ENCODE measurements at regions of chr9 and their contacts with region 1.

Region 1: DNA sequence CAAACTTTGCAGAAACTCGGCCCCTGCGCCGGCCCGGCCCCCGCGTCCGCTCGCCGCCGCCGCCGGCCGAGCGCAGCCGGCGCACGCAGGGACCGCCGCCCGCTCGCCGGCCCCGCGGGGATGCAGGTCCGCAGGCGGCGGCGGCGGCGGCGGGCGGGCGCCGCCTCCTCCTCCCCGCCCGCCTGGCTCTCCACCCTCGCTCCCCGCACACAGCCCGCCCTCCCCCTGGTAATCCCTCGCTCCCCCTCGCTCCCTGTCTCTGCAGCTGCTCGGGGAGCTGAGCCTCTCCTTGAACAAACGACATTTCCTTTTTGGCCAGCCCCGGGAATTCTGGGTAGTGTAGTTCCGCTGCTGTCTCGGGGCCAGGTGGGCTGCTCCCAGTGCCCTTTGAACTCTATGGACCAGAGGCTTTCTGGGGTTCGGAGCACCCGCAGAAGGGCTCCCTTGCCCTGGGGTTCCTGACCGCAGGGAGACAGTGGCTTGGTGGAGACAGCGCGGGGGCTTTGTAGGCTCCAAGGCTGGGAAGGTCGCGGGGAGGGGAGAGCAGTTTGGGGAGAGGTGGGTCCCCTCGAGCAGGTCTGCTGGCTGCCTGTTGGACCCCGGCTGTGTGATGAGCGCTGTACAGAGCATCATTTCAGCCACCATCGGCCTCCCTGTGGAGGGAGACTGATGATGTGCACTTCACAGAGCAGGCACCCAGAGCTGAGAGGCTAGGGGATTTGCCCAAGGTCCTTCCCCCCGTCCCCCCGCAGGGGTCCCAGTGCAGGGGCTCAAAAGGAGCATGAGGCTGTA is 1.8 kb upstream of the FAM78A start:
- DNase-seq: peak; percentile 90
- H3K4me3 Mint-ChIP-seq: peak overlapping the region; percentile 91
- H3K27ac Mint-ChIP-seq: peak overlapping the region; percentile 95
- H3K4me1 Mint-ChIP-seq: peaks cover 25% of the 10 kb centered on the region
- H3K27me3 Mint-ChIP-seq: peaks cover 14% of the 10 kb centered on the region

Region 2: GRCh38 chr9:131178382-131178781 is 99.7 kb before region 1 on chr9:
- intact Hi-C with region 1: loop called (anchors 2 kb)
- DNase-seq: peak; percentile 94
- H3K4me3 Mint-ChIP-seq: no peak overlapping the region
- H3K27ac Mint-ChIP-seq: peak overlapping the region; percentile 36
- H3K4me1 Mint-ChIP-seq: peaks cover 9% of the 10 kb centered on the region
- H3K27me3 Mint-ChIP-seq: no peaks in the 10 kb centered on the region

Region 3: GRCh38 chr9:131214286-131214856 is 63.7 kb before region 1 on chr9:
- intact Hi-C with region 1: no loop called
- DNase-seq: no peak
- H3K4me3 Mint-ChIP-seq: no peak overlapping the region
- H3K27ac Mint-ChIP-seq: no peak overlapping the region
- H3K4me1 Mint-ChIP-seq: peaks cover 10% of the 10 kb centered on the region
- H3K27me3 Mint-ChIP-seq: no peaks in the 10 kb centered on the region

Region 4: GRCh38 chr9:131393622-131394463 is 115.7 kb after region 1 on chr9 and contains the start of gene PRRC2B:
- intact Hi-C with region 1: loop called (anchors 5 kb)
- DNase-seq: peak; percentile 95
- H3K4me3 Mint-ChIP-seq: peak within 1 kb of the TSS; percentile 91
- H3K27ac Mint-ChIP-seq: peak within 1 kb of the TSS; percentile 94
- H3K4me1 Mint-ChIP-seq: peaks cover 39% of the 10 kb centered on the region
- H3K27me3 Mint-ChIP-seq: peaks cover 5% of the 10 kb centered on the region
- total RNA-seq, gene PRRC2B: 114 and 128 TPM in 2 replicates

Region 5: DNA sequence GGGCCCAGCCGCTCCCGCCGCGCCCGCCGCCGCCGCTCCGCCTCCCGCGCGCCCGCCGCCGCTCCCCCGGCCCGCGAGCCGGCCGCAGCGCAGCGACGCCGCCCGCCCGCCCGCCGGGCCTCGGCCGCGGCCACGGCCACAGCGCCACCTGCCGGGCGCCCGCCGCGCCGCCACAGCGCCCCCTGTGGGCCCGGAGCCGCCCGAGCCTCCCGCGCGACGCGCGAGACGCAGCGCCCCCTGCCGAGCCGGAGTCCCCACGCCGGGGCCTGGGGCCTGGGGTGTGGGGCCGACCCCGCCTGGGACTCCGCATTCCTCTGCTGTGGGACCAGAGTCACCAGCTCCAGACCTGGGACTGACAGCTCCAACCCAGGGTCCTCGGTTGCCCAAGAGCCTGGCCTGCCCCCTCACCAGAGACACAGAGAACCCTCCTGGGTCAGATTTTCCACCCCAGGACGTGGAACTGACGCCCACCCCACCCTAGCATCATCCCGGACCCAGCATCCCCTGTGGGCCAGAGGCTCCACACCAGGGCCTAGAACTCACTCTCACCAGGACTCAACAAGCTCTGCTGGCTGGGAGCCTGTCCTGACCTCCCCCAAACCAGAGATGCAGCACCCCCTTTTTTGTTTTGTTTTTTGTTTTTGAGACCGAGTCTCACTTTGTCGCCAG is 462.0 kb after region 1 on chr9 and contains the start of gene RAPGEF1:
- intact Hi-C with region 1: loop called (anchors 10 kb)
- DNase-seq: peak; percentile 97
- H3K4me3 Mint-ChIP-seq: peak within 1 kb of the TSS; percentile 100
- H3K27ac Mint-ChIP-seq: peak within 1 kb of the TSS; percentile 93
- H3K4me1 Mint-ChIP-seq: peaks cover 60% of the 10 kb centered on the region
- H3K27me3 Mint-ChIP-seq: no peaks in the 10 kb centered on the region
- total RNA-seq, gene RAPGEF1: 150 and 153 TPM in 2 replicates

Measured in activated CD4-positive, alpha-beta T cell treated with anti-CD3 and anti-CD28 coated beads, Interleukin-2, amount 10 ng/mL, durations not matched to agents 24 days and 14 days (primary cell).